Thyroid gland (tissue), 4 donors: ENCODE measurements at regions of chr22 and their contacts with region 1.

Region 1: DNA sequence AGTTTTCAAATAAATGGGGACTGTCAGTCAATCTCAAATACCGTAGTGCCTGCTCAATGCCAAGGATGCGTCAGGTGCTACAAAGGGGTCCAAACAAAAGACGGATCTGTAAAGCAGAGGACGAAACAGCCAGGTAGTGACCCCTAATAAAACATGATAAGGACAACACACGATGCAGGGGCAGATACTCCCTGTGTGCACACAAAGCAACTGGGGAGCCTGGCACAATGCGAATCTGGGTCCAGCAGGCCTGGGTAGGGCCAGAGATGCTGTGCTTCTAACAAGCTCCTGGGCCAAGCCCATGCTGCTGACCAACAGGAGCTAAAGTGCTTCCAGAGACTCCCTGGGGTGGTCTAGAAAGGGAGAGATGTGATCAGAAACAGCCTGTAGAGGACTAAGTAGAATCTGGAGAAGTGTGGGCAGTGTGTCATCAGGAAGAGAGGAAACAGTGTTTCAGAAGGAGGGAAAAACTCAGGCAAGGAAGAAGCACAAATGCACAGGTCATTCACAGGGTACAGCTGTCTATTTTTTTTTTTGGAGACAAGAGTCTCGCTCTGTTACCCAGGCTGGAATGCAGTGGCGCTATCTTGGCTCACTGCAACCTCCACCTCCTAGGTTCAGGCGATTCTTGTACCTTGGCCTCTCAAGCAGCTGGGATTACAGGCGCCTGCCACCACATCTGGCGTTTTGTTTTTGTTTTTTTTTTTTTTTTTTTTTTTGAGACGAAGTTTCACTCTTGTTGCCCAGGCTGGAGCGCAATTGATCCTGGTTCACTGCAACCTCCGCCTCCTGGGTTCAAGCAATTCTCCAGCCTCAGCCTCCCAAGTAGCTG is 74.5 kb downstream of the MICAL3 start:
- DNase-seq: no peak
- H3K4me3 ChIP-seq: no peak overlapping the region
- H3K27ac ChIP-seq: no peak overlapping the region
- H3K4me1 ChIP-seq: peaks cover 29 to 52% of the 10 kb centered on the region in 2 donors
- H3K27me3 ChIP-seq: no peaks in the 10 kb centered on the region
- CTCF ChIP-seq: no peak
- POLR2A ChIP-seq: no peak

Region 2: DNA sequence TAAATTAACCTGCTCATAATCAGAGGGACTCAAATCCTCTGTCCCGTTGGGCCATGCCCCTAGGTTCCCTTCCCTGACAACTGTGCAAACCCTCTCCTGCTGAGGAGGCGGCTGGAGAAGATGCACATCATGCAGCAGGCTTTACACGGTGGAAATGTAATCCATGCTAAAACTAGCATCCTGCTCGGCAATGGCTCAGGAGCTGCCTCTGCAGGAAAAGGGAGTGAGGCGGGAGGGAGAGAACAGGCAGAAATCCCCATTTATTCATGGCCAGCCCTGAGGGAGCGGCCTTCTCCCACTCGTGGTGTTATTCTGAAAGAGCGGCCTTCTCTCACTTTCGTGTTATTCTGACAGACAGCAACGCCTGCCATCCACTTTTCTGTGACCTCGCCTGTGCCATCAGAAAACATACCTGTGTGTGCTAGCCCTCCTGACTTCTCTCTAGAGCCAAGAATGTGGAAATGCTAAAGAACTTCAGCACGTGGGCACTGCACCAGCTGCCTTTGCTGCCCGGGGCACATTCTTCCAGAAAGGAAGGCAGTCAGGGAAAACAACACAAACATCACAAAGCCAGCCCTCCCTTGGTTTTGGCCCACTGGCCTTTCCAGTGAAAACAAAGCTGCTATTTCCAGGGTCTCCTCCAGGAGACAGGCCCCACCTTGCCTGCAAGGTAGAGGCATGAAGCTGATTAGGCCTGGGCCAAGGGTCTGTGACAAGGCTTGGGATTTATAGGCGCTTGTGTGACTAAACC is 112.7 kb before region 1 on chr22:
- intact Hi-C with region 1: no loop called
- DNase-seq: peak; percentile 95 to 96
- H3K4me3 ChIP-seq: peak overlapping the region in 1 of 3 donors; percentile 5
- H3K27ac ChIP-seq: peak overlapping the region; percentile 98 to 100 (median 99)
- H3K4me1 ChIP-seq: peaks cover 47 to 59% of the 10 kb centered on the region in 2 donors
- H3K27me3 ChIP-seq: no peaks in the 10 kb centered on the region
- CTCF ChIP-seq: peak in 4 of 6 experiments; percentile 41 to 73 (median 59)
- POLR2A ChIP-seq: peak in 1 of 2 donors; percentile 34

Region 3: DNA sequence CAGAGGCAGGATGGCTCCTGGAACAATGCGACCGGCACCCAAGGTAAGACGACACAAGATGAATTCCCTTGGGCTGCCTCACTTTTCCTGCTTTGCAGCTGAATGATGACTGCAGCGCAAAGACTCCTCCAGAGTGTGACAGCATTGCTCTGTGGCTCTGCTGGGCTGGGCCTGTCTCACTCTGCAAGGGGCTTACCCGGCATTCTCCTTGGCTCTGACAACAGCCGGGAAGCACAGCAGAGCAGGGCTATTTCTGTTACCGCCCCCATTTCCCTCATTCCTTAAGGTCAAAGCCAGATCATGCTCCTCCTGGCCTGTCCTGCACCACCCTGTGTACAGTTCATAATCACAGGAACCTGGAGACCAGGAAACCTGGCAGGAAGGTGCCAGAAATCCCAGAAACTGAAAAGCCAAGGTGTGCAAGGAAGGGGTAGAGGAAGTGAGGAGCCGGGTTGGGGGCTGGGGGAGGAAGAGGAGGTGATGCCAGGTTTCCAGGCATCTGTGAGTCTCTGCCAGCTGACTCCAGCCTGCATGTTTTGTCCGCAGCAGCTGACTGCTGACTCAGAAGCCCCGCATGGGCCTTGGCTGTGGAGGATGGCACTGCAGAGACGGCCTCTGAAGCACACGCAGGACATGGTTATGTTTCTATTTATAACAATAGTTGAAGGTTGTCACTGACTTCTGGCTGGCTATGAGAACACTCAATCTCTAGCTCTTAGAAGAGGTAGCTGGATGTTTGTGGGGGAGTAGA is 39.1 kb before region 1 on chr22:
- intact Hi-C with region 1: no loop called
- DNase-seq: peak; percentile 75 to 87
- H3K4me3 ChIP-seq: no peak overlapping the region
- H3K27ac ChIP-seq: peak overlapping the region; percentile 62 to 77 (median 70)
- H3K4me1 ChIP-seq: peaks cover 28 to 32% of the 10 kb centered on the region in 2 donors
- H3K27me3 ChIP-seq: no peaks in the 10 kb centered on the region
- CTCF ChIP-seq: peak in 4 of 6 experiments; percentile 29 to 41 (median 38)
- POLR2A ChIP-seq: no peak

Region 4: DNA sequence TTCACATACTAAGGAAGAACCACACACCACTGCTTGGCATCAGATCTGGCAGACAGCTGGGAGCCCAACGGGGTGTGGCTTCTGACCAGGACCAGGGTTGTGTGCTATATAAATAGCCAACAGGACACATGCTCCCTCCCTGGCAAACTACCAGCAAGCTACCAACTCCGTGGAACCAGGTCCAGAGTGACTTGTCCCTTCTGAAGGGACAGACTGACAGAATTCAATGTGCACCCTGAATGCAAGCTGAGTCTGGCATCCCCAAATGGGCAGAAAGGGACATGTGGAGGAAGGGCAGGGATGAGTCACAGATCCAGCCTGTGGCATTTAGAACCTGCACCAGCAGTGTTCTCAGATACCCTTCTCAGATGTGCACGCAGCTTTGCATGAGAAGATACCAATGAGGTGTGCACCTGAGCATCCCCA is 18.4 kb before region 1 on chr22:
- intact Hi-C with region 1: loop called (anchors 2 kb)
- DNase-seq: peak; percentile 76 to 83
- H3K4me3 ChIP-seq: no peak overlapping the region
- H3K27ac ChIP-seq: no peak overlapping the region
- H3K4me1 ChIP-seq: peaks cover 4 to 12% of the 10 kb centered on the region in 2 donors
- H3K27me3 ChIP-seq: no peaks in the 10 kb centered on the region
- CTCF ChIP-seq: no peak
- POLR2A ChIP-seq: no peak